Transverse colon (tissue), 4 donors: ENCODE measurements at regions of chr15 and their contacts with region 1.

Region 1: DNA sequence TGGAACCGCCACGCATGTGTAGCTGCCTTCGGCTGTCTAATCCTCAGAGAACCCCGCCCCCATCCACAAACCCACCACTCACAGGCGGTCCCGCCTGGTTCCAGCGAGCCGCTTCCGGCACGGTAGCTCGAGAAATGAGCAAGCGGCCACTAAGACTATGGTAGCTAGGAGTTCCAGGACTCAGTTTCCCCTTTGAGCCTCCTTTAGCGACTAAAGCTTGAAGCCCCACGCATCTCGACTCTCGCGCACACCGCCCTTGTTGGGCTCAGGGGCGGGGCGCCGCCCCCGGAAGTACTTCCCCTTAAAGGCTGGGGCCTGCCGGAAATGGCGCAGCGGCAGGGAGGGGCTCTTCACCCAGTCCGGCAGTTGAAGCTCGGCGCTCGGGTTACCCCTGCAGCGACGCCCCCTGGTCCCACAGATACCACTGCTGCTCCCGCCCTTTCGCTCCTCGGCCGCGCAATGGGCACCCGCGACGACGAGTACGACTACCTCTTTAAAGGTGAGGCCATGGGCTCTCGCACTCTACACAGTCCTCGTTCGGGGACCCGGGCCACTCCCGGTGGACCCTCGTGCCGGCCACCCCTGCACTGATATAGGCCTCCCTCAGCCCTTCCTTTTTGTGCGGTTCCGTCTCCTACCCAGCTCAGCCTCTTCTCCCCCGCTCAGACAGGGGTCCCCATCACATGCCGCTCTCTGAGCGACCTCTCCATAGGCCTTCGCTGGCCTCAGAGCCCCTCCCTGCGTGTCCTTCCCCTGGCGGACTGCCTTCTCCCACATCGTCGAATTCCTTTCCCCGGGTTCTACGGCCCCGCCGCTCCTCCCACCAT is at the start of gene RAB11A:
- DNase-seq: peak; percentile 96
- H3K4me3 ChIP-seq: peak within 1 kb of the TSS; percentile 70 to 90 (median 82)
- H3K27ac ChIP-seq: peak within 1 kb of the TSS; percentile 96 to 98 (median 97)
- H3K4me1 ChIP-seq: peaks cover 0 to 35% (median 11%) of the 10 kb centered on the region in 4 donors
- H3K27me3 ChIP-seq: no peaks in the 10 kb centered on the region
- CTCF ChIP-seq: peak; percentile 3 to 34 (median 16)
- EP300 ChIP-seq: peak; percentile 37
- POLR2A ChIP-seq: peak; percentile 98
- total RNA-seq, gene RAB11A: 25.5 to 322 (median 134) TPM

Region 2: DNA sequence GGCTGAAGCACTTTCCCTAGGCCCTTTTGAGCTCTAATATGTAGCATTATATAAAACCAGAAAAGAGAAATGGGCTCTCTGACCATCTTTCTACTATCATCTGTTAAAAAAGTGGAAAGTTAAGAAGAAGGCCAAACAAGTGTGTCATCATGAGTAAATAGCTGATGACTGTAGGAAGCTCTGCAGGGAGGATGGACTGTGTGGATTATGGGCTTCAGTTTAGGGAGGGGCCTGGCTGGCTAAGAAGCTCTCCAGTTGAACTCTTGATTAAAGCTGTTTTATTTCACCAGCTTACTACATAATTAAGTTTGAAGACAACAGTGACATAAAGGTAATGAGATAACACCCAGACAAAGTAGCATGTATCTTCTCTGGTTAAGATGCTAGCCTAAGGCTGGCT is 289.1 kb before region 1 on chr15:
- in situ Hi-C with region 1: no loop called
- intact Hi-C with region 1: no loop called
- DNase-seq: no peak
- H3K4me3 ChIP-seq: no peak overlapping the region
- H3K27ac ChIP-seq: no peak overlapping the region
- H3K4me1 ChIP-seq: no peaks in the 10 kb centered on the region
- H3K27me3 ChIP-seq: no peaks in the 10 kb centered on the region
- CTCF ChIP-seq: no peak
- EP300 ChIP-seq: no peak
- POLR2A ChIP-seq: no peak

Region 3: GRCh38 chr15:65792130-65792987 is 77.0 kb before region 1 on chr15 and contains the start of gene DENND4A:
- in situ Hi-C with region 1: no loop called
- intact Hi-C with region 1: loop called (anchors 10 kb)
- DNase-seq: peak; percentile 98
- H3K4me3 ChIP-seq: peak within 1 kb of the TSS; percentile 64 to 93 (median 85)
- H3K27ac ChIP-seq: peak within 1 kb of the TSS; percentile 97 to 99 (median 98)
- H3K4me1 ChIP-seq: peaks cover 0 to 32% (median 16%) of the 10 kb centered on the region in 4 donors
- H3K27me3 ChIP-seq: no peaks in the 10 kb centered on the region
- CTCF ChIP-seq: no peak
- EP300 ChIP-seq: no peak
- POLR2A ChIP-seq: peak; percentile 93
- total RNA-seq, gene DENND4A: 16.5 to 40.4 (median 24.5) TPM